HCT116 (cell line): ENCODE measurements at regions of chr19 and their contacts with region 1.

Region 1: GRCh38 chr19:47428177-47428894 is 9.0 kb upstream of the MEIS3 start:
- DNase-seq: peak; percentile 100
- ATAC-seq: peak; percentile 87
- H3K4me3 ChIP-seq: peak overlapping the region; percentile 24 to 55
- H3K27ac ChIP-seq: peak overlapping the region; percentile 59
- H3K4me1 ChIP-seq: peaks cover 29 to 47% of the 10 kb centered on the region in 2 experiments
- H3K27me3 ChIP-seq: no peaks in the 10 kb centered on the region
- CTCF ChIP-seq: no peak
- POLR2A ChIP-seq: no peak
- RAD21 ChIP-seq: no peak

Region 2: GRCh38 chr19:47047763-47048405 is 380.5 kb before region 1 on chr19:
- CTCF ChIA-PET with region 1: no interaction called
- POLR2A ChIA-PET with region 1: no interaction called
- RAD21 ChIA-PET with region 1: no interaction called
- intact Hi-C with region 1: no loop called
- DNase-seq: peak; percentile 78
- ATAC-seq: peak; percentile 69
- H3K4me3 ChIP-seq: peak overlapping the region; percentile 71 to 72
- H3K27ac ChIP-seq: peak overlapping the region; percentile 64
- H3K4me1 ChIP-seq: peaks cover 4 to 14% of the 10 kb centered on the region in 2 experiments; a peak in 3 of 4 replicates
- H3K27me3 ChIP-seq: no peaks in the 10 kb centered on the region
- CTCF ChIP-seq: no peak
- POLR2A ChIP-seq: peak; percentile 55
- RAD21 ChIP-seq: no peak

Region 3: GRCh38 chr19:47145639-47146486 is 282.5 kb before region 1 on chr19:
- CTCF ChIA-PET with region 1: no interaction called
- POLR2A ChIA-PET with region 1: no interaction called
- RAD21 ChIA-PET with region 1: no interaction called
- intact Hi-C with region 1: loop called (anchors 5 kb)
- DNase-seq: no peak
- ATAC-seq: no peak
- H3K4me3 ChIP-seq: no peak overlapping the region
- H3K27ac ChIP-seq: peak overlapping the region; percentile 30; the same call in 1 of the 2 replicates
- H3K4me1 ChIP-seq: peaks cover 7 to 8% of the 10 kb centered on the region in 2 experiments; a peak in 3 of 4 replicates
- H3K27me3 ChIP-seq: no peaks in the 10 kb centered on the region
- CTCF ChIP-seq: no peak
- POLR2A ChIP-seq: no peak
- RAD21 ChIP-seq: no peak

Region 4: GRCh38 chr19:47296036-47296435 is 132.3 kb before region 1 on chr19:
- CTCF ChIA-PET with region 1: interaction called, 25 read pairs
- POLR2A ChIA-PET with region 1: no interaction called
- RAD21 ChIA-PET with region 1: interaction called in 1 of 2 experiments, 4 read pairs
- intact Hi-C with region 1: loop called (anchors 1 kb)
- DNase-seq: peak; percentile 79
- ATAC-seq: peak; percentile 99
- H3K4me3 ChIP-seq: no peak overlapping the region
- H3K27ac ChIP-seq: no peak overlapping the region
- H3K4me1 ChIP-seq: peaks cover 0 to 1% of the 10 kb centered on the region in 2 experiments; a peak in 2 of 4 replicates
- H3K27me3 ChIP-seq: no peaks in the 10 kb centered on the region
- CTCF ChIP-seq: peak; percentile 69 to 89 (median 80)
- POLR2A ChIP-seq: no peak
- RAD21 ChIP-seq: peak; percentile 94

Region 5: GRCh38 chr19:47697863-47698609 is 269.7 kb after region 1 on chr19:
- CTCF ChIA-PET with region 1: interaction called, 11 read pairs
- POLR2A ChIA-PET with region 1: no interaction called
- RAD21 ChIA-PET with region 1: no interaction called
- intact Hi-C with region 1: no loop called
- DNase-seq: peak; percentile 68
- ATAC-seq: peak; percentile 89
- H3K4me3 ChIP-seq: no peak overlapping the region
- H3K27ac ChIP-seq: peak overlapping the region; percentile 49
- H3K4me1 ChIP-seq: peaks cover 3 to 8% of the 10 kb centered on the region in 2 experiments; a peak in 3 of 4 replicates
- H3K27me3 ChIP-seq: no peaks in the 10 kb centered on the region
- CTCF ChIP-seq: peak; percentile 92 to 99 (median 99)
- POLR2A ChIP-seq: no peak
- RAD21 ChIP-seq: peak; percentile 99

Region 6: GRCh38 chr19:47713046-47714021 is 285.0 kb after region 1 on chr19 and contains the start of gene EHD2:
- CTCF ChIA-PET with region 1: interaction called, 13 read pairs
- POLR2A ChIA-PET with region 1: interaction called, 11 read pairs
- RAD21 ChIA-PET with region 1: no interaction called
- intact Hi-C with region 1: no loop called
- DNase-seq: no peak
- ATAC-seq: peak; percentile 92
- H3K4me3 ChIP-seq: peak within 1 kb of the TSS; percentile 74 to 97
- H3K27ac ChIP-seq: peak within 1 kb of the TSS; percentile 93
- H3K4me1 ChIP-seq: peaks cover 5 to 17% of the 10 kb centered on the region in 2 experiments; a peak in 3 of 4 replicates
- H3K27me3 ChIP-seq: no peaks in the 10 kb centered on the region
- CTCF ChIP-seq: peak; percentile 83 to 95 (median 90)
- POLR2A ChIP-seq: peak; percentile 37
- RAD21 ChIP-seq: peak; percentile 99
- total RNA-seq, gene EHD2: 60.5 TPM